ENCODE measurements at regions of chr11 and their contacts with region 1.

Region 1: DNA sequence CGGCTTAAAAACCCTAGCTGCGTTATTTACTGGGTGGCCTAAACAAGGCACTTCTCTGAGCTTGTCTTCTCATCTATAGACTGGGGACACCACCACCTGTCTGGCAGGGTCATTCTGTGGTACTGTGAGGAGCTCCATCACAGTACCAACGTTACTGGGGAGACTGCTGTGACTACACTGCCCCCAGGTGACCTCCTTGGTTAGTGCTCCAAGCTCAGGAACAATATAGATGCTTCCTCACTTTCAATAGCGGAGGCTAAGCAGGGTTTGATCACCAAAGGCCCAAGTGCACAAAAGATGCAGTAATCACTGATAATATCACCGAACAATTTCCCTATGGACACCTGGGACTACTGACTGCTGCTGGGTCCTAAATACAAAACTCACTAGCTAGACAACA is 18.8 kb downstream of the PRPF19 start:
- DNase-seq: peak; percentile 55
- ATAC-seq: peak; percentile 99
- H3K4me3 Mint-ChIP-seq: no peak overlapping the region
- H3K27ac Mint-ChIP-seq: no peak overlapping the region
- H3K4me1 Mint-ChIP-seq: peaks cover 9% of the 10 kb centered on the region
- H3K27me3 Mint-ChIP-seq: no peaks in the 10 kb centered on the region

Region 2: DNA sequence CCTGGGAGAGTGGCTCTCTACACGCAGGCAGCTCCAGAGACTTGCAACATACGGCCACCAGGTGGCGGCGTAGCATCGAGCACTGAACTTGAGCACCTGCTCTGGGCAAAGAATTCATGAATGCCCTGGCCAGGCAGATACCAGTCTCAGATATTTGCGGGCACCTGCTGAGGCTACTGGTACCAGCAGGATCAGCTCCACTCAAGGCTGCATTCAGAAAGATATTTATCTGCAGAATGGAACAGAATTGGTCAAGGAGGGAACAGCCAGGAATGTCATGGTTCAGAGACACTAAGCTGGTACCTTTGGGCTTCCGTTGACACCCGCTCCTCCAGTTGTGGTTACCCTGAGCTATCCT is 56.4 kb before region 1 on chr11:
- POLR2A ChIA-PET with region 1: interaction called, 35 read pairs
- DNase-seq: peak; percentile 84
- ATAC-seq: peak; percentile 91
- H3K4me3 Mint-ChIP-seq: no peak overlapping the region
- H3K27ac Mint-ChIP-seq: no peak overlapping the region
- H3K4me1 Mint-ChIP-seq: peaks cover 15% of the 10 kb centered on the region
- H3K27me3 Mint-ChIP-seq: peaks cover 2% of the 10 kb centered on the region

Measured in activated naive CD8-positive, alpha-beta T cell treated with anti-CD3 and anti-CD28 coated beads, Interleukin-2, amount 10 ng/mL, durations not matched to agents 7 days and 5 days (primary cell).